ENCODE measurements at regions of chr6 and their contacts with region 1.

Region 1: GRCh38 chr6:32759669-32760068 is 3.7 kb downstream of the HLA-DQB2 start:
- DNase-seq: no peak
- CTCF ChIP-seq: no peak

Region 2: DNA sequence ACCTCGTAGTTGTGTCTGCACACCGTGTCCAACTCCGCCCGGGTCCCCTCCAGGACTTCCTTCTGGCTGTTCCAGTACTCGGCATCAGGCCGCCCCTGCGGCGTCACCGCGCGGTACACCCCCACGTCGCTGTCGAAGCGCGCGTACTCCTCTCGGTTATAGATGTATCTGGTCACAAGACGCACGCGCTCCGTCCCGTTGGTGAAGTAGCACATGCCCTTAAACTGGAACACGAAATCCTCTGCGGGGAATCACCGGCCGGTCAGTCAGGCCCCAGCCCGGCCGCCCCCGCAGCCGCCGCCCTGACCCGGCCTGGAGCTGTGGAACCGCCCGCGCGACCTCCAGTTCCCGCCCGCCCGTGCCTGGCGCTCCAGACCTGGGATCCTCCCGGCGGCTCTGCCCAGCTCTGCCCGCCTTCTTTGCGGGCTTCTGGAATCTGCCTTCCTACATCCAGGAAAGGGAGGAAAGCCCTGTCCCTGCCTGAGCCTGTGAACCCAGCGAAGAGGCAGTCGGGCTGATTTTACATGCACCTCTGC is 94.8 kb before region 1 on chr6:
- in situ Hi-C with region 1: loop called (anchors 5 kb)
- DNase-seq: peak; percentile 30
- CTCF ChIP-seq: no peak

Region 3: GRCh38 chr6:32974016-32974333 is 214.3 kb after region 1 on chr6:
- in situ Hi-C with region 1: no loop called
- DNase-seq: no peak
- CTCF ChIP-seq: no peak

Measured in GM13976 (cell line).